Activated CD4-positive, alpha-beta memory T cell treated with anti-CD3 and anti-CD28 coated beads, Interleukin-2, amount 10 ng/mL, durations not matched to agents 7 days and 5 days (primary cell): ENCODE measurements at regions of chr10 and their contacts with region 1.

Region 1: GRCh38 chr10:50508315-50509051 is 115.3 kb downstream of the SGMS1 start:
- DNase-seq: peak; percentile 71
- H3K4me3 Mint-ChIP-seq: no peak overlapping the region
- H3K27ac Mint-ChIP-seq: peak overlapping the region; percentile 37
- H3K4me1 Mint-ChIP-seq: peaks cover 75% of the 10 kb centered on the region
- H3K27me3 Mint-ChIP-seq: peaks cover 12% of the 10 kb centered on the region

Region 2: DNA sequence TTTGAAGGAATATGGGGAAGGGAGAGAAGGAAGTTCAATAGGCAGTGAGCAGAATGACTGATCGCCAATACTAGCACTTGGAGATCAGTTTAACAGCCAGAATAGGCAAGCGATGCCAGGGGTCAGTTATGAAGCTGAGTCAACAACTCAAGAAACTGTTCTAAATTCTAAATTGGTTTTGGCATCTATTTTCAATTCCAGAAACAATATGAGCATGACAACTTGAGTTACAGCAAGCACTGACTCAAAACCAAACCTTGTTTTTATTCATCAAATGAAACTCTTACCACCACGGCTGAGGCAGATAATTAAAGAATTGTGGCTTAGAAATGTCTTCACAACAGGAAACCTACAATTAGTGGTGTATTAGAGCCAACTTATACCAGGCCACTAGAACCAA is 76.7 kb before region 1 on chr10:
- CTCF ChIA-PET with region 1: no interaction called
- POLR2A ChIA-PET with region 1: interaction called, 18 read pairs
- DNase-seq: peak; percentile 25
- H3K4me3 Mint-ChIP-seq: peak overlapping the region; percentile 15
- H3K27ac Mint-ChIP-seq: peak overlapping the region; percentile 60
- H3K4me1 Mint-ChIP-seq: peaks cover 30% of the 10 kb centered on the region
- H3K27me3 Mint-ChIP-seq: peaks cover 2% of the 10 kb centered on the region

Region 3: GRCh38 chr10:50624866-50625692 is 116.6 kb after region 1 on chr10:
- CTCF ChIA-PET with region 1: interaction called, 5 read pairs
- POLR2A ChIA-PET with region 1: interaction called, 11 read pairs
- DNase-seq: peak; percentile 58
- H3K4me3 Mint-ChIP-seq: peak overlapping the region; percentile 90
- H3K27ac Mint-ChIP-seq: peak overlapping the region; percentile 87
- H3K4me1 Mint-ChIP-seq: peaks cover 39% of the 10 kb centered on the region
- H3K27me3 Mint-ChIP-seq: peaks cover 13% of the 10 kb centered on the region

Region 4: DNA sequence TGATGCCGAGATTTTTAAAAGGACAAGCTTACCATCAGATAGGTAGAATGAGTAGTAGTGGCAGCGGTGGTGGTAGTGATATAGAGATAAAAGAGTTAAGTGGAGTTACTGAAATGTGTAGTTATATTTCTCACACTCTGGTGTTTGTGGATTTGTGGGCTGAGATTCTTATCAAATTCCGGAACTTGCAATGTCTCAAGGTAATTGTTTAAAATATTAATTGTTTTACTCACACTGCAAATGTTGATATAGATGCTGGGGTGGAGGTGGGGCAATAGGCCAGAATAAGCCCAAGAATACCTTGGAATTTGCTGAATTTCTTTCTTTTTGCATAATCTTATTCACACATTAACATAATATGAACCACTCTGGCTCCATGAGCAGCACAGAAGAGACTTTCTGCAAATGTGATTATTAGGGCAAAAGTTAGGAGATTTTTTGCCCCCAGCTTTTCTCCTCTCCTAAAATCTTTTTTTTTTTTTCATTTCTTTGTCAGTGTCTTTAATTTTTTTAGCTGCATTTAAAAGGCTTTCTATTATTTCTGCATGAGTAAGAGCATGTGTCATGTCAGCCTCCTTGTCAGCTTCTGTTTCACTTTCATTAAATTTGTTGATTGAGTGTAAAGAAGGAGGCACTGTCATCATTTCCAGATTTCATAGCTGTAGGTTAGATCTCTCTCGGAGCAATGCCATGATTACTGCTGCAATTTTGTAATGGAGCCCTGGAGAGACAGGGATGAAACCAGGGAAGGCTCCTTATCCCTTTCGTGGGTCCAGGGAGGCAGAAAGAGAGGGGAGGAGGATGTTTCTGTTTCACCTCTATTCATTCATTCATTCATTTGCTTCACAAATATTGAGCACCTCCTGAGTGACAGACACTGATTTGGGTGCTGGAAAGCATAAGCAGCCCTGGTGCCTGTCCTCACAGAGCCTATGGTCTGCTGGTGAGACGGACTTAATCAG is 128.4 kb after region 1 on chr10:
- CTCF ChIA-PET with region 1: interaction called, 3 read pairs
- POLR2A ChIA-PET with region 1: interaction called, 15 read pairs
- DNase-seq: peak; percentile 55
- H3K4me3 Mint-ChIP-seq: peak overlapping the region; percentile 45
- H3K27ac Mint-ChIP-seq: peak overlapping the region; percentile 34
- H3K4me1 Mint-ChIP-seq: peaks cover 34% of the 10 kb centered on the region
- H3K27me3 Mint-ChIP-seq: peaks cover 63% of the 10 kb centered on the region